Spleen (tissue), 13 donors: ENCODE measurements at regions of chr1 and their contacts with region 1.

Region 1: DNA sequence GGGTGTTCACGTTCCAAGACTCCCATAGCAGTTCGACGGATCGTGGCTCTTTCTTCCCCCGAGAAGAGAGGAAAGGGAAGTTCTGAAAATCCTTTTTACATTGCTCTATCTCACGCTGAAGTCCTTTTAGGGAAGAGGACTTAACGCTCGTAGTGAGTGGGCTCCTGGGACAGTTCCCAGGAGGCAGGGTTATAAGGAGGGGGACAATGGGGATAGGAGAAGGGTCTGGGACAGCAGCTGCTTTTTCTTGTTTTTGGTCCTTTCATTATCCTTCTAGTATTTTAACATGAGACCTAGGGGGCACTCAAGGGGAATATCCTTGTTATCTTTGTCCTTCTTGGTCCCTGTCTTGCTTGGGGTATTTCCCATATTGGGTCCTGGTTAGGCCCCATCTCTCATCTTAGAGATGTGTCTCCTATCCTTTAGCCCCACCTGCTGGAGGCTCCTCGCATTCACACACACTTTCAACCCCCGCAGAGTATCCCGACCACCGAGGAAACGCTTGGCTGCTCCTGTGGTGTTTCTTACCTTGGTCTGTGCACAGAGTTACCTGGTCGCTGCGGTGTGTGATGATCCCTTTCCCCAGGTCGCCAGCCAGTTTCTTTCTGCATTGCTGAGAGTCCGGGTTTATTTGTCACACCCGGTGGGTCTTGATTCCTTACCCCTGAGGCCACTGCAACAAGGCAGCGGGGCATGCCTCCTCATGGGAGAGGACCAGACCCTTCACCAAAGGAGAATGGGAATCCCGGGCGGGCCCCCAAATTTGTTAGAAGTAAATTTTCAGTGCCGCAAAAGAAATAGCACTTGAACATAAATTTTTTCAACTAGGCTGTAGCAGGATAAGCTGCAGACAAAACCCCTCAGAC is 29.7 kb downstream of the SCCPDH start:
- DNase-seq: peak; percentile 78
- H3K4me3 ChIP-seq: no peak overlapping the region
- H3K27ac ChIP-seq: no peak overlapping the region
- H3K4me1 ChIP-seq: peaks cover 0 to 8% (median under 1%) of the 10 kb centered on the region in 6 donors
- H3K27me3 ChIP-seq: no peaks in the 10 kb centered on the region
- CTCF ChIP-seq: peak; percentile 50 to 81 (median 72)
- POLR2A ChIP-seq: no peak

Region 2: DNA sequence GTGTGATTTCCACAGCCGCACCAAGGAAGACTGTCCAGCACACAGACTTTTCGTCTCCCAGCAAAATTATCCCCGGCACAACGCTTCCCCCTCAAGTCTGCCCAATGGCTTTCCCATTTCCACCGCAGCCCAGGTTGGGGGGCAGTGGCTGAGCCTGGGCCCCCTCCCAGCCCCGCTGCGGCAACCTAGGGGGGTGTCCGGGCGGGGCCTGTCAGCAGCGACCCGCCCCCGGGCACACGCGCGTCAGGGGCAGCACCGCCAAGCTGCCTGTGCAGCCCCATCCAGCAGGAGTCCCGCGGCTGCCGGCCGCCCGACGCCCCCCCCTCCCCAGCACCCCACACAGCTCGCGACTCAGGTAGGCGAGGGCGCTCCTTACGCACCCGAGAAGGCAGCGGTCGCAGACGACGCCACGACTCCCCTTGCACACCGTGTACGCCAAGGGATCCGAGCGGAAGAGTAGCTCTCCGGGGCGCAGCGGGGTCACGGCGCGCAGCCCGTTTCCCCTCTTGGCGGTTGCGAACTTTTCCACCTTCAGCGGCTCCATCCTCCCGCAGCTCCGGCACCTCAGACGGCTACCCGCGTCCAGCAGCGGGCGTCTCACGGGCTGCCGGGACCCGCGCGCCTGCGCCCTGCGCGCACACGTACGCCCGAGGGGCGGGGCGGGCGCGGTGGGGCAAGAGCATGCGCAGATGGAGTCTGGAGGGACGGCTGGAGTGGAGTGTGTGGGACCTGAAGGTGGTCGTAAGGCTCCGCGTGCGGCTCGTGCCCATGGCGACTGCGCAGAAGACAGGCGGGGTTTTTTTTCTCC is 247.0 kb before region 1 on chr1 and contains the start of gene SMYD3:
- intact Hi-C with region 1: loop called (anchors 10 kb)
- DNase-seq: peak; percentile 94
- H3K4me3 ChIP-seq: peak within 1 kb of the TSS; percentile 59 to 96 (median 93)
- H3K27ac ChIP-seq: peak within 1 kb of the TSS in 7 of 8 donors; percentile 36 to 79 (median 68)
- H3K4me1 ChIP-seq: peaks cover 4 to 21% (median 15%) of the 10 kb centered on the region in 6 donors
- H3K27me3 ChIP-seq: no peaks in the 10 kb centered on the region
- CTCF ChIP-seq: peak in 4 of 11 experiments; percentile 14 to 27 (median 25)
- POLR2A ChIP-seq: no peak
- total RNA-seq, gene SMYD3: 18.7 to 33.1 (median 23.5) TPM